ENCODE measurements at regions of chr6 and their contacts with region 1.

Region 1: GRCh38 chr6:29847871-29848630 is 20.4 kb downstream of the HLA-G start:
- DNase-seq: peak; percentile 58 to 88 (median 77)
- ATAC-seq: peak; percentile 75 to 93 (median 91)
- H3K4me3 ChIP-seq: no peak overlapping the region
- H3K27ac ChIP-seq: no peak overlapping the region
- H3K4me1 ChIP-seq: peaks cover 0 to 12% (median 0%) of the 10 kb centered on the region in 12 donors
- H3K27me3 ChIP-seq: peaks cover 0 to 74% (median 32%) of the 10 kb centered on the region in 9 donors
- CTCF ChIP-seq: peak; percentile 85 to 98 (median 93)
- POLR2A ChIP-seq: no peak

Region 2: GRCh38 chr6:30037182-30037788 is 189.2 kb after region 1 on chr6:
- intact Hi-C with region 1: no loop called
- DNase-seq: no peak
- ATAC-seq: no peak
- H3K4me3 ChIP-seq: no peak overlapping the region
- H3K27ac ChIP-seq: no peak overlapping the region
- H3K4me1 ChIP-seq: peaks cover 0 to 6% (median under 1%) of the 10 kb centered on the region in 12 donors
- H3K27me3 ChIP-seq: no peaks in the 10 kb centered on the region
- CTCF ChIP-seq: peak; percentile 21 to 53 (median 32)
- POLR2A ChIP-seq: no peak

Region 3: GRCh38 chr6:30130887-30131862 is 283.1 kb after region 1 on chr6:
- intact Hi-C with region 1: loop called in 6 of 10 experiments (anchors 2 to 5 kb)
- DNase-seq: peak in 4 of 5 donors; percentile 56 to 66 (median 64)
- ATAC-seq: peak in 3 of 4 donors; percentile 90 to 93 (median 91)
- H3K4me3 ChIP-seq: no peak overlapping the region
- H3K27ac ChIP-seq: no peak overlapping the region
- H3K4me1 ChIP-seq: peaks cover 0 to 17% (median 4%) of the 10 kb centered on the region in 12 donors
- H3K27me3 ChIP-seq: peaks cover 21 to 92% (median 46%) of the 10 kb centered on the region in 9 donors
- CTCF ChIP-seq: peak; percentile 84 to 99 (median 96)
- POLR2A ChIP-seq: no peak

Region 4: GRCh38 chr6:30169658-30170614 is 321.9 kb after region 1 on chr6:
- intact Hi-C with region 1: loop called in 2 of 10 experiments (anchors 2 to 5 kb)
- DNase-seq: no peak
- ATAC-seq: peak in 3 of 4 donors; percentile 66 to 71 (median 68)
- H3K4me3 ChIP-seq: no peak overlapping the region
- H3K27ac ChIP-seq: no peak overlapping the region
- H3K4me1 ChIP-seq: peaks cover 0 to 9% (median 0%) of the 10 kb centered on the region in 12 donors
- H3K27me3 ChIP-seq: peaks cover 10 to 81% (median 41%) of the 10 kb centered on the region in 9 donors
- CTCF ChIP-seq: peak; percentile 54 to 79 (median 68)
- POLR2A ChIP-seq: no peak